ENCODE measurements at regions of chr1 and their contacts with region 1.

Region 1: GRCh38 chr1:209827384-209828262 is at the start of gene UTP25:
- DNase-seq: peak; percentile 96
- ATAC-seq: peak; percentile 93
- H3K4me3 ChIP-seq: peak within 1 kb of the TSS; percentile 58 to 98 (median 75)
- H3K4me3 Mint-ChIP-seq: peak within 1 kb of the TSS; percentile 83
- H3K27ac ChIP-seq: peak within 1 kb of the TSS; percentile 39 to 70
- H3K27ac Mint-ChIP-seq: peak within 1 kb of the TSS; percentile 77
- H3K4me1 ChIP-seq: peaks cover 17 to 23% of the 10 kb centered on the region in 2 donors
- H3K4me1 Mint-ChIP-seq: peaks cover 29% of the 10 kb centered on the region
- H3K27me3 ChIP-seq: peaks cover 0 to 6% (median 0%) of the 10 kb centered on the region in 4 experiments
- H3K27me3 Mint-ChIP-seq: peaks cover 7% of the 10 kb centered on the region
- CTCF ChIP-seq: peak; percentile 76
- total RNA-seq, gene UTP25: 16.6 and 17.1 TPM in 2 replicates

Region 2: DNA sequence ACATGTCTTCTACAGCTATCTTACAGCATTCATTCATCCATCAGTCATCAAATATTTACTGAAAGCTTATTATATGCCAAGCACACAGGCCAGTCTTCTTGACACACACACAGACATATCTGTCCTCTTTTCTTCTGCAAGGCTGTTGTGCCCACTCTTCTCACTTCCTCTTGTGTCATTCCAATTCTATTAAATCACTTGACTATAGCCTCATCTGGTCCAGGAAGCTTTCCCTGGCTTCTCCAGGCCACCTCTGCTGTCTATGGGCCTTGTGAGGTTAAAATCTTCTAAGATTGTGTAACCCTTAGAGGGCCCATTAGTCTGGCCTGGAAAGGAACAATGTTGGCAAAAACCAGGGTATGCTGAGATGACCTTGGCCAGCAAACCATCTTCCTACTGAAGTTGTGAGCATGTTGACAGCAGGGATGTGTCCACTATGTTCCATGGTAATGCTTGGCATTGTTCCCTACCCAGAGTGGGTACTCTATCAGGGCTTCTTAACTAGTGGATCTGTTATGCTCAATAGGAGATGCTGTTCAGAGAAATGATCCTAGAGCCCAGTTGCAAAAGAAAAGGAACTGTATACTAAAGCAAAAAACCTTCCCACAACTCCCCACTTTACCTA is 66.5 kb before region 1 on chr1:
- CTCF ChIA-PET with region 1: interaction called, 12 read pairs
- POLR2A ChIA-PET with region 1: interaction called, 4 read pairs
- intact Hi-C with region 1: loop called (anchors 5 kb)
- DNase-seq: no peak
- ATAC-seq: no peak
- H3K4me3 ChIP-seq: no peak overlapping the region
- H3K4me3 Mint-ChIP-seq: peak overlapping the region; percentile 12
- H3K27ac ChIP-seq: peak overlapping the region in 1 of 2 donors; percentile 76
- H3K27ac Mint-ChIP-seq: peak overlapping the region; percentile 66
- H3K4me1 ChIP-seq: peaks cover 43 to 56% of the 10 kb centered on the region in 2 donors
- H3K4me1 Mint-ChIP-seq: peaks cover 68% of the 10 kb centered on the region
- H3K27me3 ChIP-seq: no peaks in the 10 kb centered on the region
- H3K27me3 Mint-ChIP-seq: no peaks in the 10 kb centered on the region
- CTCF ChIP-seq: no peak

Region 3: DNA sequence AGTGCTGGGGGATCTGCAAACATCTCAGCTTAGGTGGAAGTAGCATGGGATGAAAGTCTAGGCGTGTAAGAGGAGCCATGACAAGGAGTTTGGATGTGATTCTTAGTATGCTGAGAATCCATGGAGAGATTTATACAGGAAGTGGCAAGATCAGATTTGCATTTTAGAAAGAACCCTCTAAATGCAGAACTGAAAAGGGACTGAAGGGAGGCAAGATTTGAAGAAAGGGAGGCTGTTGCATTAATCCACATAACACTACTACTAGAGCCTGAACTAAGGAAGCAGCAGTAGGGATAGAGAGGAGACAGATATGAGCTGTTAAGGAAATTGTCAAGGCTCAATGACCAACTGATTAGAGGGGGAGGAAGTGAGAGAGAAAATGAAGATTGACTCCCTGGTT is 53.0 kb before region 1 on chr1:
- CTCF ChIA-PET with region 1: interaction called, 11 read pairs
- POLR2A ChIA-PET with region 1: no interaction called
- intact Hi-C with region 1: loop called (anchors 5 kb)
- DNase-seq: peak; percentile 51
- ATAC-seq: peak; percentile 60
- H3K4me3 ChIP-seq: peak overlapping the region in 3 of 5 experiments; percentile 13 to 29 (median 16)
- H3K4me3 Mint-ChIP-seq: peak overlapping the region; percentile 81
- H3K27ac ChIP-seq: peak overlapping the region; percentile 42 to 77
- H3K27ac Mint-ChIP-seq: no peak overlapping the region
- H3K4me1 ChIP-seq: peaks cover 59 to 67% of the 10 kb centered on the region in 2 donors
- H3K4me1 Mint-ChIP-seq: peaks cover 3% of the 10 kb centered on the region
- H3K27me3 ChIP-seq: no peaks in the 10 kb centered on the region
- H3K27me3 Mint-ChIP-seq: no peaks in the 10 kb centered on the region
- CTCF ChIP-seq: no peak

Region 4: GRCh38 chr1:209805875-209806760 is 21.5 kb before region 1 on chr1 and contains the start of gene IRF6:
- CTCF ChIA-PET with region 1: interaction called, 45 read pairs
- POLR2A ChIA-PET with region 1: no interaction called
- intact Hi-C with region 1: loop called (anchors 1 kb)
- DNase-seq: peak; percentile 74
- ATAC-seq: peak; percentile 95
- H3K4me3 ChIP-seq: peak within 1 kb of the TSS; percentile 43 to 69 (median 57)
- H3K4me3 Mint-ChIP-seq: peak within 1 kb of the TSS; percentile 96
- H3K27ac ChIP-seq: no peak within 1 kb of the TSS
- H3K27ac Mint-ChIP-seq: peak within 1 kb of the TSS; percentile 91
- H3K4me1 ChIP-seq: peaks cover 10 to 13% of the 10 kb centered on the region in 2 donors
- H3K4me1 Mint-ChIP-seq: peaks cover 11% of the 10 kb centered on the region
- H3K27me3 ChIP-seq: peaks cover 0 to 18% (median 9%) of the 10 kb centered on the region in 4 experiments
- H3K27me3 Mint-ChIP-seq: peaks cover 11% of the 10 kb centered on the region
- CTCF ChIP-seq: no peak
- total RNA-seq, gene IRF6: 0.95 and 1.1 TPM in 2 replicates

Region 5: GRCh38 chr1:209850342-209850979 is 22.8 kb after region 1 on chr1:
- CTCF ChIA-PET with region 1: interaction called, 10 read pairs
- POLR2A ChIA-PET with region 1: no interaction called
- intact Hi-C with region 1: no loop called
- DNase-seq: peak; percentile 32
- ATAC-seq: peak; percentile 63
- H3K4me3 ChIP-seq: no peak overlapping the region
- H3K4me3 Mint-ChIP-seq: no peak overlapping the region
- H3K27ac ChIP-seq: no peak overlapping the region
- H3K27ac Mint-ChIP-seq: peak overlapping the region; percentile 75
- H3K4me1 ChIP-seq: no peaks in the 10 kb centered on the region
- H3K4me1 Mint-ChIP-seq: peaks cover 7% of the 10 kb centered on the region
- H3K27me3 ChIP-seq: no peaks in the 10 kb centered on the region
- H3K27me3 Mint-ChIP-seq: no peaks in the 10 kb centered on the region
- CTCF ChIP-seq: peak; percentile 53

Region 6: GRCh38 chr1:209870151-209870831 is 42.7 kb after region 1 on chr1:
- CTCF ChIA-PET with region 1: no interaction called
- POLR2A ChIA-PET with region 1: no interaction called
- intact Hi-C with region 1: no loop called
- DNase-seq: no peak
- ATAC-seq: no peak
- H3K4me3 ChIP-seq: no peak overlapping the region
- H3K4me3 Mint-ChIP-seq: no peak overlapping the region
- H3K27ac ChIP-seq: no peak overlapping the region
- H3K27ac Mint-ChIP-seq: no peak overlapping the region
- H3K4me1 ChIP-seq: no peaks in the 10 kb centered on the region
- H3K4me1 Mint-ChIP-seq: no peaks in the 10 kb centered on the region
- H3K27me3 ChIP-seq: peaks cover 0 to 5% (median 1%) of the 10 kb centered on the region in 4 experiments
- H3K27me3 Mint-ChIP-seq: peaks cover 50% of the 10 kb centered on the region
- CTCF ChIP-seq: no peak

Region 7: GRCh38 chr1:211258756-211259637 is 1431.4 kb after region 1 on chr1 and contains the start of gene RCOR3:
- CTCF ChIA-PET with region 1: no interaction called
- POLR2A ChIA-PET with region 1: no interaction called
- intact Hi-C with region 1: loop called (anchors 5 kb)
- DNase-seq: peak; percentile 93
- ATAC-seq: peak; percentile 74
- H3K4me3 ChIP-seq: peak within 1 kb of the TSS; percentile 81 to 93 (median 90)
- H3K4me3 Mint-ChIP-seq: peak within 1 kb of the TSS; percentile 92
- H3K27ac ChIP-seq: peak within 1 kb of the TSS; percentile 88 to 90
- H3K27ac Mint-ChIP-seq: peak within 1 kb of the TSS; percentile 96
- H3K4me1 ChIP-seq: peaks cover 11 to 16% of the 10 kb centered on the region in 2 donors
- H3K4me1 Mint-ChIP-seq: peaks cover 15% of the 10 kb centered on the region
- H3K27me3 ChIP-seq: no peaks in the 10 kb centered on the region
- H3K27me3 Mint-ChIP-seq: no peaks in the 10 kb centered on the region
- CTCF ChIP-seq: peak; percentile 84
- total RNA-seq, gene RCOR3: 120 and 124 TPM in 2 replicates